ENCODE measurements at regions of chr5 and their contacts with region 1.

Region 1: GRCh38 chr5:6623941-6624340 is 8.9 kb downstream of the NSUN2 start:
- DNase-seq: no peak
- H3K4me3 ChIP-seq: no peak overlapping the region
- H3K27ac ChIP-seq: no peak overlapping the region
- H3K4me1 ChIP-seq: no peaks in the 10 kb centered on the region
- H3K27me3 ChIP-seq: no peaks in the 10 kb centered on the region
- CTCF ChIP-seq: no peak

Region 2: GRCh38 chr5:6732634-6733410 is 108.9 kb after region 1 on chr5:
- CTCF ChIA-PET with region 1: no interaction called
- dilution Hi-C with region 1: loop called (anchors 10 kb)
- in situ Hi-C with region 1: loop called in 1 of 2 experiments (anchors 10 kb)
- intact Hi-C with region 1: no loop called
- DNase-seq: peak; percentile 58
- H3K4me3 ChIP-seq: no peak overlapping the region
- H3K27ac ChIP-seq: peak overlapping the region; percentile 56
- H3K4me1 ChIP-seq: peaks cover 24% of the 10 kb centered on the region
- H3K27me3 ChIP-seq: no peaks in the 10 kb centered on the region
- CTCF ChIP-seq: no peak

Region 3: GRCh38 chr5:6745706-6746222 is 121.8 kb after region 1 on chr5:
- CTCF ChIA-PET with region 1: no interaction called
- dilution Hi-C with region 1: no loop called
- in situ Hi-C with region 1: no loop called
- intact Hi-C with region 1: no loop called
- DNase-seq: peak; percentile 44
- H3K4me3 ChIP-seq: no peak overlapping the region
- H3K27ac ChIP-seq: no peak overlapping the region
- H3K4me1 ChIP-seq: no peaks in the 10 kb centered on the region
- H3K27me3 ChIP-seq: no peaks in the 10 kb centered on the region
- CTCF ChIP-seq: peak; percentile 77 to 79

Measured in mammary epithelial cell (primary cell).